H1 (cell line): ENCODE measurements at regions of chr11 and their contacts with region 1.

Region 1: GRCh38 chr11:131064373-131064991 is 148.2 kb upstream of the SNX19 start:
- DNase-seq: peak; percentile 82 to 93
- H3K4me3 ChIP-seq: no peak overlapping the region
- H3K27ac ChIP-seq: no peak overlapping the region
- H3K4me1 ChIP-seq: peaks cover 0 to 12% (median 8%) of the 10 kb centered on the region in 4 experiments; a peak in 5 of 7 replicates
- H3K27me3 ChIP-seq: no peaks in the 10 kb centered on the region; a peak in 1 of 7 replicates
- CTCF ChIP-seq: peak; percentile 87 to 98 (median 95)
- EP300 ChIP-seq: no peak
- POLR2A ChIP-seq: no peak
- RAD21 ChIP-seq: peak; percentile 99 to 100

Region 2: DNA sequence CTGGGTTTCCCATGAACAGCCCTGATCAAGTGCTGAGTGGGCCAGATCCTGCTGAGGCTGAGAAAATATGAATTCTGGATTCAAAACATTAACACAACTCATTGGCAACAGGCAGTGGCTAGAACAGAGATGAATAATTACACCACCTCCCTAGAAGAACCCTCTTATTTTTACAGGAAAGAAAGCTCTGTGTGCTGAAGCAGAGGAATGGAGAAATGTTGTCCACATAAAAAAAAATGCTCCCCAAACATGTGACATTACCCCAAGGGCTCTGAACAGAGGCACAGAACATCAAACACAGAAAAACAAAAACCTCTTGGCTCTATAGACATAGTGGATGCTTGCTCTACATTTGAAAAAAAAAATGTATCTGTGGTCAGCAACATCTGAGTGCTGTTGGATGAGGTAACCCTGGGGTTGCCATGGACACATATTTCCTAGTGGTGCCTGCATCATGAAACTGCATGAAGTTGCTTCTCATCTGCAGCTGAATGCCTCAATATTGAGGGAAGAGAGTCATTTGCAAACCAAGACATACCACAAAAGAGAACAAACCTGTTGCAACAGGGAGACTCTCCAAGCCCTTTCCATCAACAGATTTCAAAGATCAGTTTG is 247.0 kb before region 1 on chr11:
- CTCF ChIA-PET with region 1: no interaction called
- POLR2A ChIA-PET with region 1: no interaction called
- DNase-seq: no peak
- H3K4me3 ChIP-seq: no peak overlapping the region
- H3K27ac ChIP-seq: no peak overlapping the region
- H3K4me1 ChIP-seq: peaks cover 0 to 10% (median 6%) of the 10 kb centered on the region in 4 experiments; a peak in 4 of 7 replicates
- H3K27me3 ChIP-seq: no peaks in the 10 kb centered on the region
- CTCF ChIP-seq: no peak
- EP300 ChIP-seq: no peak
- POLR2A ChIP-seq: no peak
- RAD21 ChIP-seq: no peak

Region 3: DNA sequence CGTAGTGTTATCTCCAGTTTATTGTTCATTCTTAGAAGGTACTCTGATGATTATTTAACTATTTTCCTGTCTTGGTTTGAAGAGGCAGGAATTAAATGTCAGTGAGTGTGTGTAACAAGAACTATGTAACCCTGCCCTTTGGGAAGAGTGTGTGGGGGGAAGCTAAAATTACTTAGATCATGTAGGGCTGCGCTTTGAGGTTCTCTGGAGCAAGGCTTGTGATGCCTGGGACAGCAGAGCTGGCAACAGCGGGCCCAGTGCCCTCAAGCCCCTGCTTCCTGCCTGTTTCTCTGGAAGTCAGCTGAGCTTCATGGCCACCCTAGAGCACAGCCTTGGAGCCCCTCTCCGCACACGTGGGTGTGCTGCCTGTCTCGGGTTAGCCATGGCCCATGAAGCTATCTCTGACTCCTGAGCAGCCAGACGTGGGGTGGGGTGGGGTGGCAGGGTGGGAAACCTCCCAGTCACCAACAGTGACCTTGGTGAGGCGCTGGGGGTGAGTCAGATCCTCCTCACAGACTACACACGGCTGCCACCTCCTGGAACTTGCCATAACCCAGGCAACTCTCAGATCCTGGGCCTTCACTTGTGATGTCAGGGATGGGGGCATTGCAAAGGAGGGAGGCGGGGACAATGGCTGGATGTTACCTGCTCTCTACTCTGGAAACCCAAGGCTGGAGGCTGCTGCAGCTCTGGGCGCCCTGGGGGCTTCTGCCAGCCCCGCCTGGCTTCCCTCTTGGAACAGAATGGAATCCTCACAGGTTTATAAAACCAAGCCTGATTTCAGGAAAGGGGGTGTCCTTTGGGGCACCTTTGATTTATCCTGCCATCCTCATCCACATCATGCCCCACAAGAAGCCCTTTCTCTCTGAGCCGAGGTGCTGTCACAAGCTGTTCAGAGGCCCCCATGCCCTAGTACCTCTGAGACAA is 236.8 kb before region 1 on chr11:
- CTCF ChIA-PET with region 1: no interaction called
- POLR2A ChIA-PET with region 1: no interaction called
- DNase-seq: peak; percentile 66 to 69
- H3K4me3 ChIP-seq: no peak overlapping the region
- H3K27ac ChIP-seq: no peak overlapping the region
- H3K4me1 ChIP-seq: peaks cover 0 to 10% (median 2%) of the 10 kb centered on the region in 4 experiments; a peak in 4 of 7 replicates
- H3K27me3 ChIP-seq: no peaks in the 10 kb centered on the region
- CTCF ChIP-seq: peak; percentile 73 to 85 (median 79)
- EP300 ChIP-seq: no peak
- POLR2A ChIP-seq: no peak
- RAD21 ChIP-seq: peak; percentile 91 to 93

Region 4: GRCh38 chr11:131217313-131218310 is 153.1 kb after region 1 on chr11:
- CTCF ChIA-PET with region 1: interaction called, 28 read pairs
- POLR2A ChIA-PET with region 1: no interaction called
- DNase-seq: no peak
- H3K4me3 ChIP-seq: no peak overlapping the region
- H3K27ac ChIP-seq: peak overlapping the region; percentile 52; the same call in 1 of the 2 replicates
- H3K4me1 ChIP-seq: peaks cover 4 to 26% (median 17%) of the 10 kb centered on the region in 4 experiments
- H3K27me3 ChIP-seq: no peaks in the 10 kb centered on the region; a peak in 2 of 7 replicates
- CTCF ChIP-seq: peak in 2 of 3 experiments; percentile 32 to 35; a peak in 3 of 4 replicates
- EP300 ChIP-seq: no peak
- POLR2A ChIP-seq: no peak
- RAD21 ChIP-seq: peak; percentile 37 to 62; a peak in 3 of 4 replicates

Region 5: GRCh38 chr11:131408025-131408640 is 343.7 kb after region 1 on chr11:
- CTCF ChIA-PET with region 1: interaction called, 21 read pairs
- POLR2A ChIA-PET with region 1: no interaction called
- DNase-seq: peak; percentile 23 to 59
- H3K4me3 ChIP-seq: no peak overlapping the region
- H3K27ac ChIP-seq: no peak overlapping the region
- H3K4me1 ChIP-seq: peaks cover 0 to 3% (median 1%) of the 10 kb centered on the region in 4 experiments; a peak in 3 of 7 replicates
- H3K27me3 ChIP-seq: no peaks in the 10 kb centered on the region
- CTCF ChIP-seq: peak; percentile 76 to 83 (median 79)
- EP300 ChIP-seq: no peak
- POLR2A ChIP-seq: no peak
- RAD21 ChIP-seq: peak; percentile 78 to 80

Region 6: DNA sequence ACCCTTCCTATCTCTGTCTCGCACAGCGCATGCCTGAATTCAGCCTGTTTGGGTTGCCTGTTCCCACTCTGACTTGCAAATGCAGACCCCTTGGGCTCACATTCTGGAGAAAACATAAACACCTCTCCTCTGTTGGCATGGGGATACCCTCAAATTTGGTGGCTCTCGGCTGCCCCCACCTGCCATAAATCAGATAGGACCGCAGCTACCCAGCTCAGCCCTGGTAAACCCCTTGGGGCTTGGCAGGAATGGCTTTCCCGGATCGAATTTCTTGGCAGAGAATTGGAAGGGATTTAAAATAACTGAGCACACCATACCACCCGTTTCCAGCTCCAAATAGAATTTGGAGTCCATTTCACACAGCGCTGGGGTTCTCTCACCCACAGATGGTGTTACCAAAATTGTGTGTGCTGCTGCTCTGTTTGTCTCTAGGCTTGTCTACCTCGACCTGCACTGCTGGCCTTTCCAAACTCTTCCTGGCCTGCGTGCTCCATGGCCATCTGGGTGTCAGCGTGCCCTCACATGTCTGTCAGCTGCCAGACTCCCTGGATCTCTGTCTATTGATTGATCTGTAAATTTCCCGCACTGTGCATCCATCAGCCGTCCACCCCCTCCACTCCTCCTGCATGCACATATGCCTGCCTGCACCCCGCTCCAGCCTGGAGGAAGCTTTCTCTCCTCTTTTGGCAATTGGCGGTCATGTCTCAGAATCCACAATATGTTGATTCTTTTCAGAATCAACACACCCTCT is 439.9 kb after region 1 on chr11:
- CTCF ChIA-PET with region 1: interaction called, 59 read pairs
- POLR2A ChIA-PET with region 1: no interaction called
- DNase-seq: peak; percentile 46 to 84
- H3K4me3 ChIP-seq: no peak overlapping the region
- H3K27ac ChIP-seq: no peak overlapping the region
- H3K4me1 ChIP-seq: peaks cover 0 to 6% (median 4%) of the 10 kb centered on the region in 4 experiments; a peak in 4 of 7 replicates
- H3K27me3 ChIP-seq: no peaks in the 10 kb centered on the region; a peak in 1 of 7 replicates
- CTCF ChIP-seq: peak; percentile 73 to 86 (median 84)
- EP300 ChIP-seq: peak in 1 of 2 experiments; percentile 70; a peak in 1 of 3 replicates
- POLR2A ChIP-seq: no peak
- RAD21 ChIP-seq: peak; percentile 89 to 92

Region 7: DNA sequence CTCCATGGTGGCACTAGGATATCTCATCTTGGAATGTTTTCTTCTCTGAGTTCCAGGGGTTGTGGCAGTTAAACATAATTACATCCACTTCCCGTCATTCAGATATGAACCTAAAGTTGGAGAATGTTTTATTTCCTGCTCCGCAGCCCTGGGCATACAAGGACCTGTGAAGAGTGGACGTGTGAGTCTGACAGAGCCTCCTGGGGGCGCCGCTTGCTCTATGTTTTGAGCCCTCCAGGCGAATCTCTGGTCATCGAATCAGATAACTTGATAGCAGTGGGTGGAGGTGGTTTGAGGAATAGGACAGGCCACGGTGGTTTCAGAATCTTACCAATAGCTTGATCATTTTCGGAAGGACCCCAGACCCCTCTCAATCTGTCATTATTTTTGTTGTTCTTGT is 480.1 kb after region 1 on chr11:
- CTCF ChIA-PET with region 1: interaction called, 11 read pairs
- POLR2A ChIA-PET with region 1: no interaction called
- DNase-seq: peak; percentile 19 to 63
- H3K4me3 ChIP-seq: no peak overlapping the region
- H3K27ac ChIP-seq: no peak overlapping the region
- H3K4me1 ChIP-seq: peaks cover 0 to 4% (median 3%) of the 10 kb centered on the region in 4 experiments; a peak in 6 of 7 replicates
- H3K27me3 ChIP-seq: no peaks in the 10 kb centered on the region
- CTCF ChIP-seq: peak; percentile 51 to 71 (median 63)
- EP300 ChIP-seq: no peak
- POLR2A ChIP-seq: no peak
- RAD21 ChIP-seq: peak; percentile 73 to 83

Region 8: DNA sequence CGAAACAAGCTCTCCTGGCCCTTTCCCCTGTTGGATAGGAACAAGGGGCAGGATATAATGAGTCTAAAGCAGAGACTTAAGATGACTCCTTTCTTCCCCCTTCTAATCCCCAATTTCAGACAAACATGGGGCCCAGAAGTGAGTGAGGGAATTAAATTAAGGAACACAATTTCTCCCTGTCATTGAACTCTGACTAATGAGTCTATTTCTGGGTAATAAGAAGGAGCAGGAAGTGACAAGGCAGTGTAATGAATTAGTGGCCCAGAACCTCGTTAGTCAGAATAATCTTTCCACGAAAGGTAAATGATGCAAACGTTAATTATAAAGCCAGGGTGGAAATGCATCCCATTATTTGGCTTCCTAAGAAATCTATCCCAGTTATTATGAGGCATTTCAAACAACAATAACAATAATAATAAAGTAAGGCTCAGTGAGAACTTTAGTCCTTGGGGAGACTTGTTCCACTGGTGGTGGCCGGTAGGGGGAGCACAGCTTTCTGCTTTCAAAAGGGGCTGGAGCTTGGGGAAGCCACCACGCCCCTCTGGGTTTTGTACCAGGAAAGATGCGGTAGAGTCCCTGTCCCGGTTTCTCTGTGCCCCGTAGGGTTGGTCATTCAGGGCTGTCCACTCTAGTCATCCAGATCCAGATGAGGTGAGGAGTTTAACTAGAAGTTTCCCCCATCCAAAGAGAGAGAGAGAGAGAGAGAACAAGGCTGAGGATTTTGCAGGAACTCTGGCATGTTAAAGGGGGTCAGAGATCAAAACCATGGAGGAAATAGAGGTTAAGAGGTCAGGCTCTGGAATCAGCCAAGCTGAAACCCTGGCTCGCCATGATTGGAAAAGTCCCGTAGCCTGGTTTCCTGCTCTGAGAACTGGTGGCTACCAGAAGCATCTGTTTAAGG is 604.3 kb after region 1 on chr11:
- CTCF ChIA-PET with region 1: interaction called, 28 read pairs
- POLR2A ChIA-PET with region 1: interaction called, 3 read pairs
- DNase-seq: peak in 1 of 2 experiments; percentile 91
- H3K4me3 ChIP-seq: no peak overlapping the region
- H3K27ac ChIP-seq: no peak overlapping the region
- H3K4me1 ChIP-seq: peaks cover 0 to 2% (median under 1%) of the 10 kb centered on the region in 4 experiments; a peak in 2 of 7 replicates
- H3K27me3 ChIP-seq: no peaks in the 10 kb centered on the region; a peak in 1 of 7 replicates
- CTCF ChIP-seq: peak; percentile 70 to 82 (median 74)
- EP300 ChIP-seq: no peak
- POLR2A ChIP-seq: no peak
- RAD21 ChIP-seq: peak; percentile 47 to 57